Right ventricle myocardium inferior (tissue), 1 donor: ENCODE measurements at regions of chr13 and their contacts with region 1.

Region 1: GRCh38 chr13:73708393-73708985 is 425.7 kb downstream of the KLF12 start:
- DNase-seq: no peak
- ATAC-seq: no peak

Region 2: GRCh38 chr13:72839831-72840426 is 868.6 kb before region 1 on chr13:
- intact Hi-C with region 1: loop called (anchors 2 kb)
- DNase-seq: no peak
- ATAC-seq: no peak

Region 3: DNA sequence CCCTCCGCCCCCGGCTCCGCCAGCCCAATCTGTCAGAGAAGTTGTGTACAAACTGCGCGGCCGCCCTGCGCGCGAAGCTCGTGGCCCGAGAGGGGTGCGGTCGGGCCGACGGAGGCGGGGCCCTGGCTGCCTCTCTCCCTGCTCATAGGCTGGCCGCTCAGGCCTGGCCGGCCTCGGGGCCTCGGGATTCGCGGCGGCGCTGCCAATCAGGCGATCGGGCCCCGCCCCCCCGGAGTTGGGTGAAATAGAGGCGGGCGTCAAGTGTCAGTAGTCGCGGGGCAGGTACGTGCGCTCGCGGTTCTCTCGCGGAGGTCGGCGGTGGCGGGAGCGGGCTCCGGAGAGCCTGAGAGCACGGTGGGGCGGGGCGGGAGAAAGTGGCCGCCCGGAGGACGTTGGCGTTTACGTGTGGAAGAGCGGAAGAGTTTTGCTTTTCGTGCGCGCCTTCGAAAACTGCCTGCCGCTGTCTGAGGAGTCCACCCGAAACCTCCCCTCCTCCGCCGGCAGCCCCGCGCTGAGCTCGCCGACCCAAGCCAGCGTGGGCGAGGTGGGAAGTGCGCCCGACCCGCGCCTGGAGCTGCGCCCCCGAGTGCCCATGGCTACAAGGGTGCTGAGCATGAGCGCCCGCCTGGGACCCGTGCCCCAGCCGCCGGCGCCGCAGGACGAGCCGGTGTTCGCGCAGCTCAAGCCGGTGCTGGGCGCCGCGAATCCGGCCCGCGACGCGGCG is 649.6 kb before region 1 on chr13 and contains the start of gene KLF5:
- intact Hi-C with region 1: loop called (anchors 2 kb)
- DNase-seq: peak; percentile 98
- ATAC-seq: peak; percentile 99
- total RNA-seq, gene KLF5: 0.84 TPM